ENCODE measurements at regions of chr20 and their contacts with region 1.

Region 1: DNA sequence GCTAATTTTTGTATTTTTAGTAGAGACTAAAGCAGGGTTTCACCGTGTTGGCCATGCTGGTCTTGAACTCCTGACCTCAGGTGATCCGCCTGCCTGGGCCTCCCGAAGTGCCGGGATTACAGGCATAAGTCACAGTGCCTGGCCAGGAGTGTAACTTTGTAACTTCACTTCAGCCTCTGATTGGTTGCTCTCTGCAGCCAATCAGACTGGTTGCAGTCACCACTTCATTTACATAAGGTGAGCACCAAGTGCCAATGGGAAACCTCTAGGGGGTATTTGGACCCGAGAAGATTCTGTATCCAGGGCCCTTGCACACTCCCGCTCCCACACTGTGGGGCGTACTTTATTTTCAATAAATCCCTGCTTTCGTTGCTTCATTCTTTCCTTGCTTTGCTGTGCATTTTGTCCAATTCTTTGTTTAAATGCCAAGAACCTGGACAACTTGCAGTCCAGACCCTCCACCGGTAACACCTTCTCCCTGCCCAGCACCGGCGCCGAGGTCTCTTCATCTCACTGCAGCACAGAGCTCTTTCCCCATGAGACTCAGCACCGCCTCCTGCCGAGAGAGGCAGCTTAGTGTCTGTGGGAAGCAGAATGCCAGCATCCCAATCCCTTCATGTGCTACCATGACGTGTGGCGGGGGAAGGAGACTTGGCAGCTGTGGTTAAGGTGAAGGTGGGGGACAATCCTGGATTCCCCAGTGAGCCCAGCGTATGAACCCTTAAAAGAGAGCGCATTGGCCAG is 14.0 kb upstream of the MRGBP start:
- DNase-seq: no peak
- H3K4me3 ChIP-seq: no peak overlapping the region
- H3K27ac ChIP-seq: no peak overlapping the region
- H3K4me1 ChIP-seq: no peaks in the 10 kb centered on the region
- H3K27me3 ChIP-seq: peaks cover 0 to 77% (median 2%) of the 10 kb centered on the region in 4 donors
- CTCF ChIP-seq: no peak
- POLR2A ChIP-seq: no peak

Region 2: DNA sequence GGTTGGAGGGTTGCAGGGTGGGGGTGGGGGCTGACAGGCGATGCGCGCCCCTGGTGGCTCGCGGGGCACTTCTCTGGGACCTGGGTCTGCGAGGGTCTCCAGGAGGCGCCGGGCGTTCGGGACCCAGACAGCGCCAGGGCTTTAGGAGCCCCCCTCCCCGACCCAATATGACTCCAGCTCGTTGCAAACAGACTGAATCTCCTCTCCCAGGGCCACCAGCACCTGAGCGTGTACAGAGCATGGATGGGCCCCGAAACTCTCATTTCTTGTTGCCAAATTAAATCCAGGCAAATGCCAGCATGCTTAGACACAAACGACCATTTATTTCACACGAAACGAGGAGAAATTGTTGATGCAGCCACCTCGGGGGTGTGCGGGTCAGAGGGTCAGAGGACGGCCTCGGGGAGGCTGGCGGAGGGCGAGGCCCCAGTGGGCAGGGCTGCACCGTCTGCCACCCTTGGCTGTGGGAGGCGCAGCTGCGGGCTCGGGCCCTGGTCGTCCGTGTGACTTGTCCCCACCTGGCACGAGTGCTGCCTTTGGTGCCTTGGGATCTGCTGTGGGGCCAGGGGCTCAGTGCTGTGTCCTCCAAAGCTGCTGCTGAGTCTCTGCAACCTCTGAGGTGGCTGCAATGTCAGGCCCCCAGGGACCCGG is 285.6 kb before region 1 on chr20:
- intact Hi-C with region 1: loop called (anchors 10 kb)
- DNase-seq: no peak
- H3K4me3 ChIP-seq: no peak overlapping the region
- H3K27ac ChIP-seq: no peak overlapping the region
- H3K4me1 ChIP-seq: peaks cover 17 to 55% (median 22%) of the 10 kb centered on the region in 3 donors
- H3K27me3 ChIP-seq: peaks cover 0 to 26% (median 0%) of the 10 kb centered on the region in 4 donors
- CTCF ChIP-seq: peak; percentile 38 to 52 (median 46)
- POLR2A ChIP-seq: no peak

Region 3: DNA sequence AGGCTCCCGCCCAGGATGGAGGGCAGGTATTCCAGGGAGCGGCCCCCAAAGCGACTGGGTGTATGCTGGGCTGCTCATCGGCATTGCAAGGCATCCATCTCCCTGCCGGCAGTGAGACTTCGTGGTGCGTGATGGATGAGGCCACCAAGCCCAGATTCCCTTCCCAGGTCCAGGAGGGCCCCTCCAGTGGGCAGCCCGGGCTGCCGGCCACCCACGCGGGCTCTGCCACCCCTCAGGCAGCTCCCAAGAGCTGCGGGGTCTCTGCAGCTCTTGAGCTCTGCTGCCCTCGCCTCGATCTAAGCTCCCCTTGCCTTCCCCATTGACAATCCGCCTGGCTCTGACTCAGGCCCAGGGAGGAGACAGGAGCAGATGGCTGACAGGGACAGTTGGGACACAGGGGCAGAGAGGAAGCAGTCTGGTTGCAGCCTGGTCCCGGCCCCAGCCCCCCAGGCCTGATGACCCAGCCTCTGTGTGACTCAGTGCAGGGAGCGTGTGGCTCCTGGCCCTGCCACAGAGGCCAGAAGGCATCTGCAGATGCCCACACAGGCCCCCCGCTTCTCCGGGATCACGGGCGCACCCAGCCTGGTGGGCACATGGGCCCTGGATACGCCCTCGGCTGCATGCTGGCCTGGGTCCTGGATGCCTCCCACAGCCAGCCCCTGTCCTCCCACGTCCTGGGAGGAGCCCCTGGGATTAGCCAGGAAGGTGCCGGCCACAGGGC is 107.0 kb before region 1 on chr20:
- intact Hi-C with region 1: loop called (anchors 5 kb)
- DNase-seq: no peak
- H3K4me3 ChIP-seq: no peak overlapping the region
- H3K27ac ChIP-seq: no peak overlapping the region
- H3K4me1 ChIP-seq: no peaks in the 10 kb centered on the region
- H3K27me3 ChIP-seq: peaks cover 0 to 66% (median 0%) of the 10 kb centered on the region in 4 donors
- CTCF ChIP-seq: no peak
- POLR2A ChIP-seq: no peak